K562 (cell line): ENCODE measurements at regions of chr22 and their contacts with region 1.

Region 1: DNA sequence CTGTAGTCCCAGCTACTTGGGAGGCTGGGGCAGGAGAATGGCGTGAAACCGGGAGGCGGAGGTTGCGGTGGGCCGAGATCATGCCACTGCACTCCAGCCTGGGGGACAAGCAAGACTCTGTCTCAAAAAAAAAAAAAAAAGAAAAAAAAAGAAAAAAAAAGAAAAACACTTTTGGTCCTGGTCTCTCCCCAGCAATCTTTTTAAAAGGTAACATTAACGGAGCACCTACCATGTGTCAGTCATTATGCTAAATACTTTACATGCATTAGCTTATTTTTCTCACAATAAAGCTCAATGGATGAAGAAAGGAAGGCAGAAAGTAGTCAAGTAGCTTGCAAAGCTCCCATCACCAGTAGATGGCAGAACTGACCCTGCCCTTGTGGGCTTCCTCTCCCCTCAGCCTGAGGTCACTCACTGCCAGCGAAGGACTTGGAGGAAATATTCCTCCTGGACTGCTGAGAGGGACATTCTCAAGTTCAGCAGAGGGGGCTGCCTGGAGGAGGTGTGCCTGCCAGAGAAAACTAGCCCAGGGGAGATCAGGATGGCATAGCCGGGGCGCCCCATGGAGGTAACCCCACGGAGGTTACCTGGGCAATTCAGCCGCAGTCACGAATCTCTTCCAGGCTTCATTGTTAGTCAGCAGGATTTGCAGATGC is 15.5 kb downstream of the APOL3 start:
- DNase-seq: peak in 2 of 4 experiments; percentile 27 to 59
- ATAC-seq: peak; percentile 93
- H3K4me3 ChIP-seq: no peak overlapping the region
- H3K27ac ChIP-seq: no peak overlapping the region
- H3K4me1 ChIP-seq: peaks cover 0 to 3% of the 10 kb centered on the region in 2 experiments; a peak in 1 of 5 replicates
- H3K27me3 ChIP-seq: peaks cover 5 to 16% of the 10 kb centered on the region in 2 experiments; a peak in 3 of 5 replicates
- CTCF ChIP-seq: peak; percentile 69 to 85 (median 76)
- EP300 ChIP-seq: no peak
- POLR2A ChIP-seq: no peak
- RAD21 ChIP-seq: peak; percentile 74 to 92

Region 2: DNA sequence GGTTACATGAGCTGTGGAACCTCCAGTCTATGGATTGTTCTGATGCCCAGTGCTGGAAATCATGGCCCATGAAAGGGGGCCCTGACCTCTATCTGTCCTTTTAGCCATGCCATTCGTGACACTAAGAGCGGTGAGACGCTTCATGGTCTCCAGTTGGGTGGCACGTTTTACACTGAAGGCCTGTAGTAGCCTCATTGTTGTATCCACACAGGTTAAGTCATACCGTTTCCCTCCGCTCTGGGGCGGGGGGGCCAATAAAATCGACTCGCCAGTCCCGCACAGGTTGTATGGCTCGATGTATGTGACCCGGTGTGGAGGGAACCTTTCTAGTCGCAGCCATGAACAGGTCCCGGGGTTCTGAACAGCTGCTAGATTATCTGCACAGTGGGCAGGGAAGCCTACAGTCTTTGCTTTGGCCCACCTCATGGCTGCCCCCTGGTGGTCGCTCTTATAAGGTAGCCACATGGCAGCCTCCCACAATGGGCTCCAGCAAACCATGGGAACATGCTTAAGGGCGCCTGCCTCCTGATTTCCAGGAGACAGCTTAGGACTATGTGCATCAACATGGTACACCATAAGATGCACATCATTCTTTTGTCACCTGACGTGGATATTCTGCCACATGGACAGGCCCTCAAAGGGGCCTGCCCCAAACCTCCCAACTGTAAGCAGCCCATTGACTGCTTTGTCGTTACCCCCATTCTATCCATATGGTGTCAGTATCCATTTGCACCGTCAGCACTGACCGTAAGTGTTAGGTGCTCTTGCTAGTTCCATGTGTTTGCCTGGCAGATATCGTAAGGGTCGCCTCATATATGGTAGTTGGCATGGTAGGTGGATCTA is 35.2 kb after region 1 on chr22:
- CTCF ChIA-PET with region 1: interaction called, 5 read pairs
- POLR2A ChIA-PET with region 1: interaction called, 3 read pairs
- in situ Hi-C with region 1: loop called (anchors 5 kb)
- intact Hi-C with region 1: loop called (anchors 1 kb)
- DNase-seq: peak; percentile 70 to 79 (median 74)
- ATAC-seq: peak; percentile 98
- H3K4me3 ChIP-seq: no peak overlapping the region
- H3K27ac ChIP-seq: no peak overlapping the region
- H3K4me1 ChIP-seq: peaks cover 0 to 6% of the 10 kb centered on the region in 2 experiments; a peak in 2 of 5 replicates
- H3K27me3 ChIP-seq: no peaks in the 10 kb centered on the region
- CTCF ChIP-seq: peak; percentile 73 to 84 (median 80)
- EP300 ChIP-seq: no peak
- POLR2A ChIP-seq: no peak
- RAD21 ChIP-seq: peak; percentile 62 to 80

Region 3: GRCh38 chr22:36221799-36222751 is 77.1 kb after region 1 on chr22:
- CTCF ChIA-PET with region 1: interaction called, 5 read pairs
- POLR2A ChIA-PET with region 1: no interaction called
- in situ Hi-C with region 1: no loop called
- intact Hi-C with region 1: loop called (anchors 5 kb)
- DNase-seq: peak; percentile 29 to 67 (median 40)
- ATAC-seq: peak; percentile 96
- H3K4me3 ChIP-seq: no peak overlapping the region
- H3K27ac ChIP-seq: no peak overlapping the region
- H3K4me1 ChIP-seq: peaks cover 0 to 8% of the 10 kb centered on the region in 2 experiments; a peak in 2 of 5 replicates
- H3K27me3 ChIP-seq: no peaks in the 10 kb centered on the region
- CTCF ChIP-seq: peak; percentile 69 to 81 (median 76)
- EP300 ChIP-seq: no peak
- POLR2A ChIP-seq: no peak
- RAD21 ChIP-seq: peak; percentile 54 to 84

Region 4: DNA sequence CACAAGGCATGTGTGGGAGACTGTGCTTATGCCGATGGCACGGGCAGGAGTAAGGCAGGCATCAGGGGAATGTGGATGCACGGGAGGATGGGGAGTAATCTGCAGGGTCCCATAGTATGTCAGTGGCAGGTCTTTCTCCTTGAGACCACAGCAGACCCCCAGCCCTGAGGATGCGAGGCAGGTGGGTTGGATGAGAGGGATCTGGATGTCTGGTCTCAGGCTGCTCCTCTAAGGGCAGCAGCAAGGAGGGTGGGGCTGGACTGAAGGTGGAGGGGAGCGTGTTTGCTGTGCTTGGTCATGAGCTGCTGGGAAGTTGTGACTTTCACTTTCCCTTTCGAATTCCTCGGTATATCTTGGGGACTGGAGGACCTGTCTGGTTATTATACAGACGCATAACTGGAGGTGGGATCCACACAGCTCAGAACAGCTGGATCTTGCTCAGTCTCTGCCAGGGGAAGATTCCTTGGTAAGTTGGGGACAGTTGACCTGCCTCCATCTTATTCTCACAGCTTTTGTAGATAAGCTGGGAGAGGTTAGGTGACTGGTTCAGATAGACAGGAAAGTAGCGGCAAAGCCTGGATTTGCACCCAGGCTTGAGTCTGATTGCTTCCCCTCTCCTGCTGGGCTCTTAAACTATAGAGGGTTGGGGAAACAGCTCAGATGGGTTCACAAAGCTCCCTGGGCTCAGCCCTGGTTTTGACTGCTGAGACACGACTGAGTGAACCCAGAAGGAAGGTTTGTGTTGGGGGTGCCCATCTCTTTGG is 107.9 kb after region 1 on chr22 and contains the start of gene APOL1:
- CTCF ChIA-PET with region 1: no interaction called
- POLR2A ChIA-PET with region 1: no interaction called
- in situ Hi-C with region 1: no loop called
- intact Hi-C with region 1: no loop called
- DNase-seq: peak; percentile 23 to 75 (median 44)
- ATAC-seq: peak; percentile 79
- H3K4me3 ChIP-seq: peak within 1 kb of the TSS; percentile 36
- H3K27ac ChIP-seq: peak within 1 kb of the TSS; percentile 61
- H3K4me1 ChIP-seq: peaks cover 22 to 31% of the 10 kb centered on the region in 2 experiments
- H3K27me3 ChIP-seq: no peaks in the 10 kb centered on the region
- CTCF ChIP-seq: no peak
- EP300 ChIP-seq: no peak; the same call in 1 of the 2 replicates
- POLR2A ChIP-seq: peak; percentile 54
- RAD21 ChIP-seq: no peak
- polyA plus RNA-seq, gene APOL1: 2.5 to 4.2 TPM

Region 5: GRCh38 chr22:36286471-36287224 is 141.6 kb after region 1 on chr22:
- CTCF ChIA-PET with region 1: no interaction called
- POLR2A ChIA-PET with region 1: no interaction called
- in situ Hi-C with region 1: no loop called
- intact Hi-C with region 1: loop called (anchors 5 kb)
- DNase-seq: peak; percentile 77 to 83 (median 82)
- ATAC-seq: peak; percentile 99
- H3K4me3 ChIP-seq: no peak overlapping the region
- H3K27ac ChIP-seq: no peak overlapping the region; the same call in 2 of the 3 replicates
- H3K4me1 ChIP-seq: peaks cover 0 to 12% of the 10 kb centered on the region in 2 experiments; a peak in 2 of 5 replicates
- H3K27me3 ChIP-seq: no peaks in the 10 kb centered on the region
- CTCF ChIP-seq: peak; percentile 84 to 93 (median 91)
- EP300 ChIP-seq: no peak
- POLR2A ChIP-seq: no peak
- RAD21 ChIP-seq: peak; percentile 43 to 78